ENCODE measurements at regions of chrX and their contacts with region 1.

Region 1: GRCh38 chrX:48475774-48476577 is at the start of gene FTSJ1:
- DNase-seq: peak; percentile 93
- H3K4me3 ChIP-seq: peak within 1 kb of the TSS; percentile 58 to 73 (median 66)
- H3K27ac ChIP-seq: peak within 1 kb of the TSS; percentile 77 to 89 (median 84)
- H3K4me1 ChIP-seq: peaks cover 0 to 11% (median 4%) of the 10 kb centered on the region in 4 donors
- H3K27me3 ChIP-seq: no peaks in the 10 kb centered on the region
- CTCF ChIP-seq: no peak
- EP300 ChIP-seq: no peak
- POLR2A ChIP-seq: peak in 1 of 2 donors; percentile 10
- total RNA-seq, gene FTSJ1: 24.6 to 39.9 (median 28.4) TPM

Region 2: GRCh38 chrX:48071064-48071985 is 404.7 kb before region 1 on chrX and contains the start of gene ZNF630:
- intact Hi-C with region 1: loop called (anchors 10 kb)
- DNase-seq: peak; percentile 88
- H3K4me3 ChIP-seq: peak within 1 kb of the TSS; percentile 58 to 69 (median 62)
- H3K27ac ChIP-seq: peak within 1 kb of the TSS; percentile 79 to 82 (median 80)
- H3K4me1 ChIP-seq: peaks cover 0 to 4% (median 0%) of the 10 kb centered on the region in 4 donors
- H3K27me3 ChIP-seq: no peaks in the 10 kb centered on the region
- CTCF ChIP-seq: no peak
- EP300 ChIP-seq: no peak
- POLR2A ChIP-seq: peak in 1 of 2 donors; percentile 46
- total RNA-seq, gene ZNF630: 4.3 to 7.5 (median 4.7) TPM

Region 3: GRCh38 chrX:48508400-48509244 is 32.6 kb after region 1 on chrX and contains the start of gene PORCN:
- intact Hi-C with region 1: loop called (anchors 2 kb)
- DNase-seq: peak; percentile 91
- H3K4me3 ChIP-seq: peak within 1 kb of the TSS; percentile 62 to 83 (median 71)
- H3K27ac ChIP-seq: peak within 1 kb of the TSS; percentile 76 to 83 (median 82)
- H3K4me1 ChIP-seq: peaks cover 0 to 14% (median 8%) of the 10 kb centered on the region in 4 donors
- H3K27me3 ChIP-seq: no peaks in the 10 kb centered on the region
- CTCF ChIP-seq: no peak
- EP300 ChIP-seq: no peak
- POLR2A ChIP-seq: peak; percentile 41 to 44
- total RNA-seq, gene PORCN: 12.2 to 13.3 (median 12.9) TPM

Region 4: DNA sequence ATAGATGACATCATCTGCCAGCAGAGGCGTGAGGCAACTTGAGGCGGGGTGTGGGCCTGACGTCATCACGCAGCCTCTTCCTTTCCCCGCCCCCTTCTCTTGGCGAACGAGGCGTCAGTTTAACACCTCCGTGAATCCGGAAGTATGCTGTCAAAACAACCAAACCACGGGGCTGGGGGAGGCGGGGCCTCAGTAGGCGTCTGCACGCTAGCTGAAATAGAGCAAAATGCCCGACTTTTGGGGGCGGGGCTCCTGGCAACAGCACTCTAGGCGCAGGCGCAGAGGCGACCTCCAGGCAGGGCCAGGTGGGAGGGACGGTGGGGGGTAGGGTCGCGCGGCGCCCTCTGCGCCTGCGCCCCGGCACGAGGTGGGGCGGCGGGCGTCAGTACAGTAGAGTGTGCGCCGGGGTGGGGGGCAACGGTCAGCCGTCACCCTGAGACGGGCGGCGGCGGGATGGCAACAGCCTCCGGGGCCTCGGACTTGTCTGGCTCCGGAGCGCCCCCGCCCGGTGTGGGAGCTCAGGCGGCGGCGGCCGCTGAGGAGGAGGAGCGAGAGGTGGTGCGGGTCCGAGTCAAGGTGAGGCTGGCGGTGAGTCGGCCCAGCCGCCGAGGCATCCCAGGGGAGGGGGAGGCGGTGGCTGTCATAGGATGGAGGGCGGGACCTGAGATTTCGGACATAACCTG is 63.5 kb after region 1 on chrX and contains the start of gene TBC1D25:
- intact Hi-C with region 1: no loop called
- DNase-seq: peak; percentile 99
- H3K4me3 ChIP-seq: peak within 1 kb of the TSS; percentile 60 to 70 (median 66)
- H3K27ac ChIP-seq: peak within 1 kb of the TSS; percentile 88 to 91 (median 90)
- H3K4me1 ChIP-seq: peaks cover 0 to 11% (median 3%) of the 10 kb centered on the region in 4 donors
- H3K27me3 ChIP-seq: no peaks in the 10 kb centered on the region
- CTCF ChIP-seq: peak in 1 of 4 experiments; percentile 7
- EP300 ChIP-seq: peak in 1 of 4 donors; percentile 33
- POLR2A ChIP-seq: peak in 1 of 2 donors; percentile 26
- total RNA-seq, gene TBC1D25: 10.4 to 14.6 (median 11.9) TPM

Region 5: GRCh38 chrX:48597353-48598264 is 121.6 kb after region 1 on chrX and contains the start of gene WDR13:
- intact Hi-C with region 1: no loop called
- DNase-seq: peak; percentile 95
- H3K4me3 ChIP-seq: peak within 1 kb of the TSS; percentile 51 to 71 (median 64)
- H3K27ac ChIP-seq: peak within 1 kb of the TSS; percentile 92 to 97 (median 94)
- H3K4me1 ChIP-seq: peaks cover 0 to 10% (median 6%) of the 10 kb centered on the region in 4 donors
- H3K27me3 ChIP-seq: no peaks in the 10 kb centered on the region
- CTCF ChIP-seq: no peak
- EP300 ChIP-seq: no peak
- POLR2A ChIP-seq: peak; percentile 15 to 46
- total RNA-seq, gene WDR13: 99.9 to 132 (median 106) TPM

Region 6: DNA sequence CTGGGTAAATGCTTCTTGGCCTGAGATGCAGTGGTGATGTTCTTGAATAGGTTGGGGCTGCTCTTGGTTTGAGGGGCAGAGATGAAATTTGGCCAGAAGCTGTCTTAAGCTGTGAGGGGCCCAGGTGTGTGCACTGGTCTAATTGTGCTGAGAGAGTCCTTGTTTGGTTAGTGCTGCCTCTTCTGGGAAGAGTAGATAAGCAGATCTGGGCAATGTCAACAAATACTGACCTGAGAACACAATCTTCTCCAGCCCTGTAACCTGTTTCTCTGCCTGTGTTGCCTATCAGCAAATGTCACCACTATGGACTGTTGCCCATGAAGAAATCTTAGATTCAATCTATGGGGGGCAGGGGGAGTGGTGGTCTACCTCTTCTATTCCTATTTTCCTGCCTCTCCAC is 1386.1 kb after region 1 on chrX:
- intact Hi-C with region 1: no loop called
- DNase-seq: no peak
- H3K4me3 ChIP-seq: no peak overlapping the region
- H3K27ac ChIP-seq: no peak overlapping the region
- H3K4me1 ChIP-seq: no peaks in the 10 kb centered on the region
- H3K27me3 ChIP-seq: no peaks in the 10 kb centered on the region
- CTCF ChIP-seq: no peak
- EP300 ChIP-seq: no peak
- POLR2A ChIP-seq: no peak